Activated CD4-positive, alpha-beta memory T cell treated with anti-CD3 and anti-CD28 coated beads, Interleukin-2, amount 10 ng/mL, durations not matched to agents 7 days and 5 days (primary cell): ENCODE measurements at regions of chr22 and their contacts with region 1.

Region 1: DNA sequence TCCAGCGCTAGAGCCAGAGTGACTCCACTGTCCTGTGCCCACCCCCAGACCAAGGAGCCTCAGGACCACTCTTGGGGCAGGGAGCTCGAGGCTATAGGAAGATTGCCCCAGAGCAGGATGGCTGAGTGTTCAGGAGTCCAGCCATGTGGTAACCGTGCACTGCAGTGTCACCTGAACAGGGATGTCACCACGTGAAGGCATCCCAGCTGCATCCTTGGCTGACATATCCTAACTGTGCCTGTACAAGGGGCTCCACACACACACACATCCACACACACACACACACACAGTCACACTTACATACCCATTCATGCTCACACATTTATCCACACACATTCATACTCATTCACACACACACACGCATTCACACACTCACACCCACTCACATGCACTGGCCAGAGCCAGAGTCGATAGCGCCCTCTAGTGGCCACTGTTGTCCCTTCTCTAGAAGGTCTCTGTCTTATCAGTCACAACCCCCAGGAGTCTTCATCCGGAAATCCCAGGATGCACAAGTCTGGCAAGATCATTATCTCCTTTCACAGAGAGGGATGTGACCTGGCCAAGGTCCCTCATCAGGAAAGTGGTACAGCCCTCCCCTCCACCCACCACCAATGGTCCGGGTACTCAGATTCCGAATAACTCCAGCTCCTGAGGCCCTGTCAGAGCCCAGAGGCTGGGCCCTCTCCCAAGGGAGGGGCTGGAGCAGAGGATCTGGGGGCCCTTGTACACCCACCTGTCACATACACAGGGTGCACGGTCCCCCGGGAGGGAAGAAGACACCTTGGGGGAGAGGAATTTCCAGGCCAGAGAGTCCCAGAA is 55.1 kb downstream of the IGLL5 start:
- DNase-seq: peak; percentile 84
- H3K4me3 Mint-ChIP-seq: no peak overlapping the region
- H3K27ac Mint-ChIP-seq: no peak overlapping the region
- H3K4me1 Mint-ChIP-seq: peaks cover 19% of the 10 kb centered on the region
- H3K27me3 Mint-ChIP-seq: peaks cover 15% of the 10 kb centered on the region

Region 2: GRCh38 chr22:22802339-22802970 is 140.3 kb before region 1 on chr22:
- CTCF ChIA-PET with region 1: interaction called, 12 read pairs
- POLR2A ChIA-PET with region 1: no interaction called
- DNase-seq: peak; percentile 55
- H3K4me3 Mint-ChIP-seq: no peak overlapping the region
- H3K27ac Mint-ChIP-seq: no peak overlapping the region
- H3K4me1 Mint-ChIP-seq: peaks cover 4% of the 10 kb centered on the region
- H3K27me3 Mint-ChIP-seq: peaks cover 13% of the 10 kb centered on the region

Region 3: GRCh38 chr22:22928666-22929380 is 13.9 kb before region 1 on chr22:
- CTCF ChIA-PET with region 1: interaction called, 11 read pairs
- POLR2A ChIA-PET with region 1: interaction called, 5 read pairs
- DNase-seq: peak; percentile 84
- H3K4me3 Mint-ChIP-seq: no peak overlapping the region
- H3K27ac Mint-ChIP-seq: peak overlapping the region; percentile 78
- H3K4me1 Mint-ChIP-seq: peaks cover 59% of the 10 kb centered on the region
- H3K27me3 Mint-ChIP-seq: peaks cover 4% of the 10 kb centered on the region

Region 4: DNA sequence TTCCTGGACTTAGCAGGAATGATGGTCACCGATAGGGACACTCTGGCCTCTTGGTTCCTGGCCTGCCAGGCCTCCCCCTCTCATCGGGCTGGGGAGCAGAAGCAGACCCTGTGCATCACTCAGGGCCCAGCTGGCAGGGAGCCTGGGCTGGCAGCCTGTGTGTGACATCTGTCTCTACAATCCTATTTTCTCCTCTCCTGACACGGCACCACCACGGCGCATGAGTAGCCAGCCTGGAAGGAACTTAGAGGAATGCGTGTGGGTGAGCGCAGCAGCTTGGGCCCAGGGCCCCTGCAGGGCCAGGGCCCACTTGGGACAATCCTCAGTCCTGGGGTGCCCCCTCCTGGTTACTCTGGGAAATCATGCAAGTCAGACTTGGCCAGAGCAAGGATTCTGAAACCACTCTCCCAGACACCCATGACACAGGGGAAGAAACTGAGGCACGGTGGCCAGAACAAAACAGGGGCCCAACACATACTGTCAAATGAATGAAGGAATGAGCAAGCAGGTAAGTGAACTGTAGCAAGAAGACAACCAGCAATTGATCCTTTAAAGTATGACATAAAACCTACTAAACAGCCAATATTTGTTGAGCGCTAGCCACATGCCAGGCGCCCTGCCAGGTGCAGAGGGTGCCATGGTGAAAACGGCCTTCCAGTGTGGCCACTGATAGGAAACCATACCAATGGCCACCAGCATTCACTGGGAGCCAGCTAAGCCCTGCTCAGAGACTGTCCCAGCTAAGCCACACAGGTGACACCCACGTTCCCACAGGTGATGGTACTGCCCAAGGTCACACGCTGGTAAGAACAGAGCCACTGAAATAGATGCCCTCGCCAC is 185.8 kb after region 1 on chr22:
- CTCF ChIA-PET with region 1: no interaction called
- POLR2A ChIA-PET with region 1: no interaction called
- DNase-seq: peak; percentile 72
- H3K4me3 Mint-ChIP-seq: no peak overlapping the region
- H3K27ac Mint-ChIP-seq: no peak overlapping the region
- H3K4me1 Mint-ChIP-seq: no peaks in the 10 kb centered on the region
- H3K27me3 Mint-ChIP-seq: peaks cover 2% of the 10 kb centered on the region